Sigmoid colon (tissue), 7 donors: ENCODE measurements at regions of chr4 and their contacts with region 1.

Region 1: GRCh38 chr4:24912252-24913118 is at the start of gene CCDC149:
- DNase-seq: peak; percentile 84
- H3K4me3 ChIP-seq: peak within 1 kb of the TSS; percentile 36 to 93 (median 80)
- H3K27ac ChIP-seq: peak within 1 kb of the TSS; percentile 87 to 95 (median 92)
- H3K4me1 ChIP-seq: peaks cover 0 to 23% (median 11%) of the 10 kb centered on the region in 4 donors
- H3K27me3 ChIP-seq: no peaks in the 10 kb centered on the region
- CTCF ChIP-seq: no peak
- EP300 ChIP-seq: no peak
- POLR2A ChIP-seq: no peak
- total RNA-seq, gene CCDC149: 11.8 to 21.3 (median 16.5) TPM

Region 2: GRCh38 chr4:24743931-24744330 is 168.6 kb before region 1 on chr4:
- intact Hi-C with region 1: no loop called
- DNase-seq: no peak
- H3K4me3 ChIP-seq: no peak overlapping the region
- H3K27ac ChIP-seq: peak overlapping the region in 3 of 4 donors; percentile 40 to 71 (median 56)
- H3K4me1 ChIP-seq: peaks cover 0 to 36% (median 19%) of the 10 kb centered on the region in 4 donors
- H3K27me3 ChIP-seq: no peaks in the 10 kb centered on the region
- CTCF ChIP-seq: no peak
- EP300 ChIP-seq: no peak
- POLR2A ChIP-seq: no peak

Region 3: GRCh38 chr4:24794916-24795665 is 117.4 kb before region 1 on chr4 and contains the start of gene SOD3:
- intact Hi-C with region 1: loop called (anchors 5 kb)
- DNase-seq: peak; percentile 95
- H3K4me3 ChIP-seq: peak within 1 kb of the TSS; percentile 5 to 47 (median 37)
- H3K27ac ChIP-seq: peak within 1 kb of the TSS; percentile 80 to 89 (median 86)
- H3K4me1 ChIP-seq: peaks cover 0 to 42% (median 31%) of the 10 kb centered on the region in 4 donors
- H3K27me3 ChIP-seq: peaks cover 0 to 9% (median 0%) of the 10 kb centered on the region in 3 donors
- CTCF ChIP-seq: no peak
- EP300 ChIP-seq: no peak
- POLR2A ChIP-seq: peak in 1 of 2 donors; percentile 69
- total RNA-seq, gene SOD3: 45.3 to 164 (median 95.4) TPM